Common myeloid progenitor, CD34-positive (primary cell): ENCODE measurements at regions of chr4 and their contacts with region 1.

Region 1: GRCh38 chr4:47704693-47705325 is 133.1 kb downstream of the CORIN start:
- DNase-seq: peak; percentile 36 to 55 (median 51)
- H3K4me3 ChIP-seq: no peak overlapping the region
- H3K27ac ChIP-seq: no peak overlapping the region
- H3K4me1 ChIP-seq: no peaks in the 10 kb centered on the region
- H3K27me3 ChIP-seq: no peaks in the 10 kb centered on the region

Region 2: GRCh38 chr4:47662975-47663374 is 41.8 kb before region 1 on chr4:
- CTCF ChIA-PET with region 1: no interaction called
- POLR2A ChIA-PET with region 1: no interaction called
- DNase-seq: peak in 2 of 3 donors; percentile 10 to 15
- H3K4me3 ChIP-seq: no peak overlapping the region
- H3K27ac ChIP-seq: no peak overlapping the region
- H3K4me1 ChIP-seq: no peaks in the 10 kb centered on the region
- H3K27me3 ChIP-seq: no peaks in the 10 kb centered on the region

Region 3: GRCh38 chr4:47686294-47686872 is 18.4 kb before region 1 on chr4:
- CTCF ChIA-PET with region 1: interaction called, 12 read pairs
- POLR2A ChIA-PET with region 1: no interaction called
- DNase-seq: peak; percentile 62 to 81 (median 77)
- H3K4me3 ChIP-seq: no peak overlapping the region
- H3K27ac ChIP-seq: no peak overlapping the region
- H3K4me1 ChIP-seq: no peaks in the 10 kb centered on the region
- H3K27me3 ChIP-seq: peaks cover 0 to 2% (median 0%) of the 10 kb centered on the region in 5 experiments

Region 4: DNA sequence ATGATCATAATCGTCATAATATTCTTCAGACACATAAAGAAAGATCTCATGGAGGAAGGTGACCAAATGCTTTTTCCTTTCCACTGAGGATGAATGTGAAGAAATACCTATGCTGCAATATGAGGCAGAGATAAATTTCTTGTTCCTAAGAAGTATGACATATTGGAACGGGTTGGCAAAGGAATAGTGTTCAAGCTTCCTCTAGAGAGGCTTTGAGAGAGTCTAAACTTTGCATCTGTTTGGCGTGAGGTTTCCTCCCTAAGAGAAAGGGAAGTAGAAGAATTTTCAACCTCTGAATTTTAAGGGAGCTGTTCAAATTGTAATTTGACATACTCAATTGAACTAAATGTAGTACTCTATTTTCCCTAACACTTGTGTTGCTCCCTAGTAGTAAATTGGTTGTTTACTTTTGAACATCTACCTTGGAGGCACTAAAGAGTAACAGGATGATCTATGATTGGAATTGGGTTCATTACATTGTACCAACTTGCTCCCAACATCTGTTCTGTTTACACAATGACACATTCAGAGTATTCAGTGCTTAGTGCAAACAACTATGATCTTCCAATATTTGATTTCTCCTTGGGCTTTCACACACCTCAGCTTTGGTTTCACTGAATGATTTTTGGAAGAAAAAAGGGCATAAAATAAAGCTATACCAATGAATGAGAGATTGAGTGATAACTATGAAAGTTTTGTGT is 11.1 kb after region 1 on chr4:
- CTCF ChIA-PET with region 1: interaction called, 14 read pairs
- POLR2A ChIA-PET with region 1: no interaction called
- DNase-seq: peak in 2 of 3 donors; percentile 37 to 48
- H3K4me3 ChIP-seq: no peak overlapping the region
- H3K27ac ChIP-seq: no peak overlapping the region
- H3K4me1 ChIP-seq: peaks cover 0 to 6% (median 1%) of the 10 kb centered on the region in 4 experiments
- H3K27me3 ChIP-seq: no peaks in the 10 kb centered on the region

Region 5: GRCh38 chr4:47786958-47787370 is 82.2 kb after region 1 on chr4:
- CTCF ChIA-PET with region 1: no interaction called
- POLR2A ChIA-PET with region 1: no interaction called
- DNase-seq: no peak
- H3K4me3 ChIP-seq: no peak overlapping the region
- H3K27ac ChIP-seq: no peak overlapping the region
- H3K4me1 ChIP-seq: no peaks in the 10 kb centered on the region
- H3K27me3 ChIP-seq: no peaks in the 10 kb centered on the region

Region 6: GRCh38 chr4:47836641-47837093 is 131.9 kb after region 1 on chr4:
- CTCF ChIA-PET with region 1: interaction called, 109 read pairs
- POLR2A ChIA-PET with region 1: no interaction called
- DNase-seq: peak; percentile 30 to 46 (median 34)
- H3K4me3 ChIP-seq: peak overlapping the region; percentile 40 to 82 (median 68)
- H3K27ac ChIP-seq: no peak overlapping the region
- H3K4me1 ChIP-seq: peaks cover 12 to 32% (median 30%) of the 10 kb centered on the region in 4 experiments
- H3K27me3 ChIP-seq: peaks cover 0 to 28% (median 6%) of the 10 kb centered on the region in 5 experiments

Region 7: GRCh38 chr4:47933840-47934239 is 229.0 kb after region 1 on chr4:
- CTCF ChIA-PET with region 1: interaction called, 33 read pairs
- POLR2A ChIA-PET with region 1: no interaction called
- DNase-seq: peak; percentile 52 to 73 (median 68)
- H3K4me3 ChIP-seq: no peak overlapping the region
- H3K27ac ChIP-seq: no peak overlapping the region
- H3K4me1 ChIP-seq: peaks cover 0 to 5% (median 0%) of the 10 kb centered on the region in 4 experiments
- H3K27me3 ChIP-seq: peaks cover 0 to 2% (median 0%) of the 10 kb centered on the region in 5 experiments